ENCODE measurements at regions of chr5 and their contacts with region 1.

Region 1: GRCh38 chr5:65481635-65482295 is at the start of gene ADAMTS6:
- DNase-seq: peak; percentile 93 to 96 (median 95)
- ATAC-seq: peak; percentile 97 to 98
- H3K4me3 ChIP-seq: peak within 1 kb of the TSS; percentile 98
- H3K27ac ChIP-seq: peak within 1 kb of the TSS; percentile 89
- H3K4me1 ChIP-seq: no peaks in the 10 kb centered on the region
- H3K27me3 ChIP-seq: no peaks in the 10 kb centered on the region
- total RNA-seq, gene ADAMTS6: 0.86 to 1.8 (median 1.1) TPM

Region 2: DNA sequence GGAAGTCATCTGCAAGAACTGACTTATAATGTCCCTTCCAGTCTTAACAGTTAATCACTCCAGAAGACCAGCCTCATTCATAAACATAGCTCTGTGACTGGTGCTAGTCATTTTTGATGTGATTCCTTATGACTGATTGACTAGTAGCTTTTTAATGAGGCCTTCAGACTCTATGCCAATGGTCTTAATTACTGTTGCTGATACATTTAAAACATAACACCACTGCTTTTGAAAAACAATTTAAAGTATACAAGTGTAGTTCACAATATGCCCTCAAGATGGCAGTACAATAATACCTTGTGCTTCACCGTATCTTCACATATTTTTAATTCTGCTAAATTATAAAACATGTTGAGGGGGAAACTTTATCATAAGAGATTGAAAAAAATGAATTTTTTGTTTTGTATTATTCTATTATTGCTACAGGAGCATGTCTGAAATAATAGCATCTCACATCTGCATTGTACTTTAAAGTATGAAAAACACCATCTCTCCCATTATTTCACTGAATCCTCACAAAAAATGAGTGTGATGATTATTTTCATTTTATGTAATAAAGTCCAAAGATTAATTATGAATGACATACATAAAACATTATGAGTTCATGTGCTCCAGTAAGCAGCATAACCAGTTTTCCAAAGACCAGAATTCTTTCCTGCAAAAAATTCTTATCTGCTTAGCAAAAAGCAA is 846.6 kb before region 1 on chr5:
- intact Hi-C with region 1: loop called in 3 of 4 experiments (anchors 10 kb)
- DNase-seq: no peak
- ATAC-seq: no peak
- H3K4me3 ChIP-seq: no peak overlapping the region
- H3K27ac ChIP-seq: no peak overlapping the region
- H3K4me1 ChIP-seq: no peaks in the 10 kb centered on the region
- H3K27me3 ChIP-seq: no peaks in the 10 kb centered on the region

Region 3: DNA sequence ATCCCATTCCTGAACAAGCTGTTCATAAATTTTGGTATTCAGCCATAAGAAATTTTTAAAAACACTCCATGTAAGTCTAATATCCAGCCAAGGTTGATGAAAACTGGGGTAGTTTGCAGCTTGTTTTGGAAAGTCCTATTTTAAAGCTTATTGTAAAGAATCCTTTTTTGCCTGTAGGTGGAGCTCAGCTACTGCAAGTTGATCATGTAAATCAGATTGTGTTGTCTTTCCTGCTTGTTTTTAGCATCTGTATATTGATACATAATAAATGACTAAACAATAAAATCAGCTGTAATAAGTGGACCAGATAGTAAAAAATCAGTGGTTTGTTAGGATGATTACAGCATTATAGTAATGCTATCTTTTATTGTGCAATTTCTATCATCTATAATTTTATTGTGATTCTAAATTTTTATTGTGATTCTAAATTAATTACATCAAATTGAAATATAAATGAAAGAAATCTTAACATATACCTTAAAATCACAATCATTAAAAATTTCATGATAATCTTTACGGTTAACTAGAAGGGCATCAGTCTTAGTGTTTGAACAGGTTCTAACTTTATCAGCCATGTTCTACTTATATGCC is 670.6 kb before region 1 on chr5:
- intact Hi-C with region 1: loop called in 3 of 4 experiments (anchors 5 to 10 kb)
- DNase-seq: no peak
- ATAC-seq: peak; percentile 44 to 66
- H3K4me3 ChIP-seq: no peak overlapping the region
- H3K27ac ChIP-seq: no peak overlapping the region
- H3K4me1 ChIP-seq: no peaks in the 10 kb centered on the region
- H3K27me3 ChIP-seq: no peaks in the 10 kb centered on the region

Region 4: GRCh38 chr5:64818245-64818644 is 663.5 kb before region 1 on chr5:
- intact Hi-C with region 1: loop called in 2 of 4 experiments (anchors 5 to 10 kb)
- DNase-seq: no peak
- ATAC-seq: no peak
- H3K4me3 ChIP-seq: no peak overlapping the region
- H3K27ac ChIP-seq: no peak overlapping the region
- H3K4me1 ChIP-seq: no peaks in the 10 kb centered on the region
- H3K27me3 ChIP-seq: no peaks in the 10 kb centered on the region

Region 5: DNA sequence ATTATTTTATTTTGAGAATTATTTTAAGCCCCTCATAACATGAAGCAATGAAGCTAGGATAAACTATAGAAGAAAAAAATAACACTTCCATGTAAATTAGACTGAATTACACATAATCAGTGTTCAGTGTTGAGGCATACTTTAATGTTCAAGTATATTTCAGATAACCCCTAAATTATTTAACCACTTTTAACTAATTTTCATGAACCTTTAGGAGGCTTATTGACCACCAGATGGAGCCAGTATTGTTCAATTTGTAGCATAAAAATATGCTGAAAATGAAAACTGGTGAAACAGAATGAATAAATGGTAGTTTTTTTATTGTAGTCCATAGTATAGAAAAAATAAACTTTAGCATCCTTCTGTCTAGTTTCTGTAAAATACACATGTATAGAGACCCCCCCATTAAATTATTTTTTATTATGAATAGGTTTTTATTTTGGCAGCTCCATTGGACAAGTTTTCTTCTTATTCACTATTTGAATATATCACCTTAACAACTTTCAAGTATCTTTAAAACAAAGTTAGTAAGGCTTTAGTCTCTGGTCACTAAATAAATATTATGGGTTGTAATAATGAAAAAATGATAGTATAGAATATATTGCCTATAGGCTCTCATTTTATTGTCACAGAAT is 522.9 kb before region 1 on chr5:
- intact Hi-C with region 1: loop called in 3 of 4 experiments (anchors 5 to 10 kb)
- DNase-seq: no peak
- ATAC-seq: no peak
- H3K4me3 ChIP-seq: no peak overlapping the region
- H3K27ac ChIP-seq: no peak overlapping the region
- H3K4me1 ChIP-seq: no peaks in the 10 kb centered on the region
- H3K27me3 ChIP-seq: no peaks in the 10 kb centered on the region

Region 6: DNA sequence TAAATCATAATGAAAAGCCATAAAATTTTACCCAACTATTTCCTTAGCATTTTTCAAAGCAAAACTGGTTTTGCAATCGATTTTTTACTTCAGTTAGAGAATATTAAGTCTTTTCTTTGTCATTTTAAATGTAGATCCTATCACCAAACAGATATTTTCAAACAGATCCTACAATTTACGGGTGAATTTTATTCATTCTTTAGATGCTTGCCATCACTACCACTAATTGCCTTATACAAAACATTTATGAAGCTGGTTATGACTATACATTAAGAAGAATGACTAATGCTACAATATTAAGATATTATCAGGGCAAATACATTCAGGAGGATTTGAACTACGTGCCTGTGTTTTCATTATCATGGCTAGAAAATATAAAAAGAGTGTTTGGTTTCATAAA is 516.2 kb before region 1 on chr5:
- intact Hi-C with region 1: loop called in 2 of 4 experiments (anchors 5 to 10 kb)
- DNase-seq: no peak
- ATAC-seq: no peak
- H3K4me3 ChIP-seq: no peak overlapping the region
- H3K27ac ChIP-seq: no peak overlapping the region
- H3K4me1 ChIP-seq: no peaks in the 10 kb centered on the region
- H3K27me3 ChIP-seq: no peaks in the 10 kb centered on the region

Region 7: DNA sequence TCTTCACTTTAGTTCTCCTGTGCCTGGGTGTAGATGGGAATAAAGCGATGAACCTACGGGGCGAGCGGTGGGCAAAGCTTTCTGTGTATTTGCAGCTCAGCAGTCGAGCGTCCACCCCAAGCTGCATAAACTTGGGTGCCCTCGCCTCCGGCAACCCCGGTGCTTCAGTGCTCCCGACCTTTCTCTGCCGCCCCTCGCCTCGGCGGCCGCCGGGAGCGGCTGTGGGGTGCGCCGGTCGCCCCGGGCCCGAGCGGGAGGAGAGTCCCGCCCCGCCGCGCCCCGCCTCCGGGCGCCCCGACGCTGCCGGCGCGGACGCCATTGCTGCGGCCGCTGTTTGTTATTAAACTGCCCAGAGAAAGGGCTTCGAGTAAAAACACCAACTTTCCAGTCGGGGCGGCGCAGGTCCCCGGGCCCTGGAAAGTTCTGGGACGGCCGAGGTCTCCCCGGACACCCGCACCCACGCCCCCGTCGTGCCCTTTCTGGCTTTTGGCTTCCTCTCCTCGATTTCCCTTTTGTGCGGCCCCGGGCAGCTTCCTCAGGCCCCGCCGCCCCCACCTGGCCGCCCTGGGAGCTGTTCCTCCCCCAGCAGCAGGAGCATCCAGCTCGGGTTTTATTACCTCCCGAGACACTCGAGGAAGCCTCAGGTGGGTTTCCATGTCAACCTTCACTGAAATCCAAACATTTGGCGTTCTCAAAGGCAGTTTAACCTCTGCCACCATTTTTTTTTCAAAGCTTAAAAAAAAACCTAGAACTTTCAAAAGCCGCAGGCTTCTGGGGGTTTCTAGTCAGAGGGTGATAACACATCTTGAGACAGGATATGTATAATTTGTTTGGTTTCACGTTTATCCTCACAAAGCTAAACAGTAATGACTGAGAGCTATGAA is 378.7 kb before region 1 on chr5:
- intact Hi-C with region 1: loop called (anchors 2 to 10 kb)
- DNase-seq: peak; percentile 55 to 87 (median 86)
- ATAC-seq: peak; percentile 92 to 94
- H3K4me3 ChIP-seq: peak overlapping the region; percentile 79
- H3K27ac ChIP-seq: peak overlapping the region; percentile 68
- H3K4me1 ChIP-seq: peaks cover 2% of the 10 kb centered on the region
- H3K27me3 ChIP-seq: no peaks in the 10 kb centered on the region

Region 8: DNA sequence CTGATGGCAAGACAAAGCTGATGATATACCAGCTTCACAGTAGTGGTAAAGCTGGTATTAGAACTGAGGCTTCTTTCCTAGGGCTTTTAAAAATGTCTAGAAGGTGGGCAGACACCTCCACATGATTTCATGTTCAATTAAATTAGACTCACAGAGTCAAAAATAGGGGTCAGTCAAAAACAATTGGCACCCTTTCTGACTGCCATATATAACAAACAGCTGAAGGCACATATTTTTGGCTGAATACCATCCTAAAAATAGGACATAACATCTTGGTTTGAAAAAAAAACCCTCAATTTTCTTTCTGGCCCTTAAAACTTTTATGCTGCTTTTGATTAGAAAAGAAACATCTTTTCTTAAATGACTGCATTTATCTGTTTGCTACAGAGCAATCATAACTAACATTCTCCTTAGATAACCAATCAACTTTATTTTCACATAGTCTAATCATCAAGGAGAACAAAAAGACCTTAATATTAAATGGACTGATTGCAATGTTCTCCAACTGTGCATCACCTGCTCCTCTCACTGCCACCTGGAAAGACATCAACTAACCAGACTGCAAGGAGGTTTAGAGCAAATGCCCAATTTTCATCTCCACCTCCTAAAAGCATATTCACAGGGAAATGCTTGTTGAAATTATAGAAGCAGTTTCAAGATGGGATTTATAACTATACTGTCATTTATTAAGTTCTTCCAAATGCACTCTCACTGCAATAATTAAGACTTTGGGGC is 237.0 kb after region 1 on chr5:
- intact Hi-C with region 1: no loop called
- DNase-seq: no peak
- ATAC-seq: no peak
- H3K4me3 ChIP-seq: no peak overlapping the region
- H3K27ac ChIP-seq: no peak overlapping the region
- H3K4me1 ChIP-seq: no peaks in the 10 kb centered on the region
- H3K27me3 ChIP-seq: no peaks in the 10 kb centered on the region

Region 9: DNA sequence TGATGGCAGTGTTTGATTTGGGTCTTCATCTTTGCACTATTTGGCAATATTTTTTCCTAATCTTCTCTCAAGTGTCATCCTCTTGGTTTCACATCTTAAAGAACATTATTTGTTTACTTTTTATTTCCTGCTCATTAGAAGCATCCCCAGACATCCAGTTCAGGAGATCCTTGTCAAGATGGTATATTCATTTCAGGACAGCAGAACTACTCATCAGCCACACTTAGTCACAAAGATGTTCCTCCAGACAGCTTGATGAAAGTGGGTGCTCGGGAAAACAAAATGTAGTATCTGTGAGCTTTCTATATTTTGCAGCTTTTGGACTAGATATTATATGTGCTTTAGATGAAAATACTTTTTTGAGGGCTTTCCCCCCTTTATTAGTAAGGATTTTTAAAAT is 590.3 kb after region 1 on chr5:
- intact Hi-C with region 1: no loop called
- DNase-seq: no peak
- ATAC-seq: no peak
- H3K4me3 ChIP-seq: no peak overlapping the region
- H3K27ac ChIP-seq: no peak overlapping the region
- H3K4me1 ChIP-seq: peaks cover 1% of the 10 kb centered on the region
- H3K27me3 ChIP-seq: no peaks in the 10 kb centered on the region